Dendritic cell treated with granulocyte-macrophage colony-stimulating factor and Interleukin-4, amounts not matched to agents 40 ng/mL and 50 ng/mL, for 4 days (primary cell): ENCODE measurements at regions of chr12 and their contacts with region 1.

Region 1: DNA sequence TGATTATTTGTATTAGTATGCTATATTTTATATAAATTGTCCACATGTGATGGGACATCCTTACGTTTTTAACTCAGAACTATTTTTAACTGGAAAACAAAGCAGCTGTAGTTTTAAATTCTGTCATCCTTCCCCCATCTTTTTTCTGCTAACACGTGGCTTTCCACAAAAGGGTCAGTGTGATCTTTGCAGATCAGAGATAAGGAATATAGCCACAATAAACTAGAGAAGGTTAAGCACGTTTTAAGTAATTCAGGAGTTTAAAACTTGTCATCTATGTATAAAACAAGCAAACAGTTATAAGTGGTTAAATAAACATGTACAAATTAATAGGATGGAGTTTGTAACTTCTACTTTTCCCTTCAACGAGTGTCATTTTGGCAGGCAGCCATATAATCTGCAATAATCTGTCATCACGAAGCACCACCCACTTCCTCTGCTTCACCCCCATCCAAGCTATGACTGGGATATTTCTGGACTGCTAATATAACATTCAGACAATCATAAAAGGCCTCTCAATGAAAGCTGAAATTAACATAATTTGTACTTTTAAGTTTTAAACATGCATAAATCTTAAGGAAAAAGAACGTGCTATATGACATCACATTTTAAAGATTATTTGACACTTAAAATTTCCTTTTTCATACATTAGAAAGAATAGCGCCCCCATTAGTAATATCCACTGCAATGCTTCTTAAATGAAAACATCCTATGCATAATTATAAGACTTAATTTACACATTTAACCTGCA is 15.3 kb downstream of the TAOK3 start:
- H3K4me3 Mint-ChIP-seq: peak overlapping the region; percentile 42
- H3K27ac Mint-ChIP-seq: peak overlapping the region; percentile 79
- H3K4me1 Mint-ChIP-seq: peaks cover 49% of the 10 kb centered on the region
- H3K27me3 Mint-ChIP-seq: no peaks in the 10 kb centered on the region

Region 2: DNA sequence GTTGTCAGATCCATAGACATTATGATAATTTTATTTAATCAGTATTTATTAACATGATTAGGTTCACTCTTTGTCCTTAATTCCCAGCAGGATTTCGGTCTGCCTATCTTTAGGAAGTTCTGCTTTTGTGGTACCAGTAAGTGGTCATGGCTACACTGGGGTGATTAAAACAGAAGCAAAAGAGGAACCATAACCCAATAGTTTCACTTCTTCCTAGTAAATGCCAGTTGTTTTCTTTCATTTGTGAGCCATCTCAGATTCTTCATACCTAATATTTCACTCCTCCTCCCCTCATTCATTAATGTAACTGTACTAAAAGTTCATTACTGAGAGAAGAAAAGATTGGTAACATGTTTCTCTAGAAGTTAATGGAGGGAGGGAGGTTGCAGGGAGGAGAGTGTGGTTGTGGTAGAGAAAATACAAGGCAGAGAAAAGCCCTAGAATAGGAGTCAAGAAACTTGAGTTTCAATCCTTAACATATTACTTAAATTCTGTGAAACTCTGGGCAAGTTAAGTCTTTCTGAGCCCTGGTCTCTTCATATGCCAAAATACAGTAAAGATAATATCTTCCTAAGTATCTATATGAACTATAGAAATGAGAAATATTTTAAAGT is 120.3 kb before region 1 on chr12:
- intact Hi-C with region 1: loop called (anchors 5 kb)
- H3K4me3 Mint-ChIP-seq: peak overlapping the region; percentile 17
- H3K27ac Mint-ChIP-seq: peak overlapping the region; percentile 81
- H3K4me1 Mint-ChIP-seq: peaks cover 30% of the 10 kb centered on the region
- H3K27me3 Mint-ChIP-seq: no peaks in the 10 kb centered on the region